ENCODE measurements at regions of chr2 and their contacts with region 1.

Region 1: GRCh38 chr2:234981197-234982117 is 29.6 kb downstream of the SH3BP4 start:
- DNase-seq: peak; percentile 95
- H3K4me3 ChIP-seq: no peak overlapping the region
- H3K27ac ChIP-seq: peak overlapping the region; percentile 87 to 93 (median 88)
- H3K4me1 ChIP-seq: peaks cover 62 to 68% of the 10 kb centered on the region in 2 donors
- H3K27me3 ChIP-seq: no peaks in the 10 kb centered on the region
- CTCF ChIP-seq: peak in 1 of 6 experiments; percentile 6
- POLR2A ChIP-seq: peak in 1 of 2 donors; percentile 60

Region 2: DNA sequence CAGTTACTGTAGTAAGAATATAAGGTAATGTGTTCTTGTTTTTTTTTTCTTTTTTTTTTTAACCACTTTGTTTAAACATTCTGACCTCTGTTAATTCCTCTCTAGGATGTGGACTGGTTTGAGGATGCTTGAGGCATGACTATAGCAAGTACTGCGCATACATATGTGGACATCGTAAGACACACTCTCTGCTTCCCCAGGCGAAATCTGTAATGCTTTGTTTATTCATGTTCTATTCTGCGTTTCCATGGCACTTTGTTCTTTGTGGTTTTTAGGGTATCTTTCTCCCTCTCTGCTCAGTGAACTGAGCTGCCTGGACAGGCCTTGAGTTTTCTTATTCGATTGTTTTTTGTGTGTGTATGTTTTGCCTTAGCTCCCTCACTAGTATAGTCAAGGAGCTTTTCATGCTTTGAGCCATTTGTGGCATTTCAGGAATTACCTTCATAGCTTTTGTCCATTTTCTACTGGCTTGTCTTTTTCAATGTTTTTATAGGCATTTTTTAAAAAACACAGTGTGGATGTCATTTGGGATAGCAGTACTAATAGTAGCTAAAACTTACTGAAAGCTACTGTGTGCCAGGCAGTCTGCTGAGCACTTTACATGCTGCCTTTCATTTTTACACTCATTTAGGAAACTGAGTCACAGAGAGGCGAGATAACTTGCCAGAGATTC is 31.6 kb before region 1 on chr2:
- intact Hi-C with region 1: loop called (anchors 5 kb)
- DNase-seq: peak; percentile 30 to 39
- H3K4me3 ChIP-seq: no peak overlapping the region
- H3K27ac ChIP-seq: peak overlapping the region; percentile 70 to 91 (median 71)
- H3K4me1 ChIP-seq: peaks cover 24 to 36% of the 10 kb centered on the region in 2 donors
- H3K27me3 ChIP-seq: no peaks in the 10 kb centered on the region
- CTCF ChIP-seq: no peak
- POLR2A ChIP-seq: peak in 1 of 2 donors; percentile 67

Measured in thyroid gland (tissue), 4 donors.